Left cardiac atrium (tissue), 4 donors: ENCODE measurements at regions of chr14 and their contacts with region 1.

Region 1: DNA sequence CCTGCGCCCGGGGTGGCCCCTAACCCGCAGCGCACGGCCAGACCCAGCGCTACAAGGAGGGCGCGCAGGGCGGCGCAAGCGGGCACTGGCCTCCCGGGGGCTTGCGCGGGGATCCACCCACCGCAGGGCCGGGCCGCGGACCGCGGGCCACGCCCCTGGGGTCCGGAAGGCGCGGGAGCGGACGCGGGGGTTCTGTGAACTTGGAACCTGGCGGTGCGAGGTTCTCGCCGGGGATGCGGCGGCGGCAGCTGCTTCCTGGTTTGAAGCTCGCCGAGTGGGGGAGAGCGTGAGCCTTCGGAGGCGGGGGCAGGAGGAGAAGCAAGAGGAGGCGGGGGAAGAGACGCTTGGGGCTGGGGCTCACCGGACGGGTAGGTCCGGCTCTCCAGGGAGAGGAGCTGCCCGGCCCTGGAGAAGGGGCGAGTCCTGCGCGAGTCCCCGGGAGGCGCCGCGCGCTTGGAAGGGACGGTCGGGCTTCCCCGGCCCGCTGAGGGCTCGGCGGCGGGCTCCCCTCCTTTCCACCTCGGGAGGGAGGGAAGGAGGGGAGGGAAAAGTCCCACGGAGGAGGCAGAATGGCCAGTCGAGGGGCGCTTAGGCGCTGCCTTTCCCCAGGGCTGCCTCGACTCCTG is at the start of gene PRKCH:
- DNase-seq: peak; percentile 87
- ATAC-seq: peak; percentile 83 to 88
- total RNA-seq, gene PRKCH: 17.6 to 34.8 TPM

Region 2: DNA sequence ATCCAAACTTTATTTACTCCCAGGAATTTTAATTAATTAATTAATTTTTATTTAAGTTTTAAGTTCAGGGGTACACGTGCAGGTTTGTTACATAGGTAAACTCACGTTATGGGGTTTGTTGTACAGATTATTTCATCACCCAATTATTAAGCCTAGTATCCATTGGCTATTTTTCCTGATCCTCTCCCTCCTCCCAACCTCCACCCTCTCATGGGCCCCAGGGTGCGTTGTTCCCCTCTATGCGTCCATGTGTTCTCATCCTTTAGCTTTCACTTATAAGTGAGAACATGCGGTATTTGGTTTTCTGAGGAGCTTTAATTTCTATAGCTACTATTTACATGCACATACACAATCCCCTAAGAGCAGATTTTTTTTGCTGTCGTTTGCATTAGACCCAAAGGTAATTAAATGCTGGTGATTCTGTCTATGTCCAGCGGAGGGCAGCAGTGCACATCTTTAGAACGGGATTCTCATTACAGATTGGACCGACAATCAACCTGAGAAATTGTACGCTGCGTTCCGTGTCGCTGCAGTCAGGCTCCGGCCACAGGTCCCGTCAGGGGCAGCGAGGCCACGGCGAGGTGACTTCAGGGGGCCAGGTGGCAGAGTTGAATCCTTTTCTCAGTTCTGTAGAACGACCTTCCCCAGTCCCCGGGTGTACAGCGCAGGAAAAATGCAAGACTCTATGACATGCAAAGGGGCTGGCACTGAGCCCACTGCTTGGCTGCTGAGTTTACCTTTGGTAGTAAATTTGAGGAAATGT is 52.0 kb before region 1 on chr14:
- intact Hi-C with region 1: no loop called
- DNase-seq: peak; percentile 77
- ATAC-seq: peak; percentile 80 to 83

Region 3: GRCh38 chr14:61456720-61457119 is 135.2 kb after region 1 on chr14:
- intact Hi-C with region 1: loop called in 1 of 2 experiments (anchors 10 kb)
- DNase-seq: peak; percentile 89
- ATAC-seq: peak; percentile 68 to 74